Posterior cingulate gyrus (tissue), 11 donors: ENCODE measurements at regions of chr18 and their contacts with region 1.

Region 1: GRCh38 chr18:8704361-8705279 is 736 bp upstream of the MTCL1 start:
- DNase-seq: peak; percentile 80 to 98 (median 86)

Region 2: GRCh38 chr18:8609659-8610458 is 94.8 kb before region 1 on chr18:
- intact Hi-C with region 1: loop called (anchors 5 kb)
- DNase-seq: peak in 4 of 10 donors; percentile 10 to 85 (median 50)

Region 3: GRCh38 chr18:8786478-8787370 is 82.1 kb after region 1 on chr18:
- intact Hi-C with region 1: loop called (anchors 10 kb)
- DNase-seq: no peak

Region 4: DNA sequence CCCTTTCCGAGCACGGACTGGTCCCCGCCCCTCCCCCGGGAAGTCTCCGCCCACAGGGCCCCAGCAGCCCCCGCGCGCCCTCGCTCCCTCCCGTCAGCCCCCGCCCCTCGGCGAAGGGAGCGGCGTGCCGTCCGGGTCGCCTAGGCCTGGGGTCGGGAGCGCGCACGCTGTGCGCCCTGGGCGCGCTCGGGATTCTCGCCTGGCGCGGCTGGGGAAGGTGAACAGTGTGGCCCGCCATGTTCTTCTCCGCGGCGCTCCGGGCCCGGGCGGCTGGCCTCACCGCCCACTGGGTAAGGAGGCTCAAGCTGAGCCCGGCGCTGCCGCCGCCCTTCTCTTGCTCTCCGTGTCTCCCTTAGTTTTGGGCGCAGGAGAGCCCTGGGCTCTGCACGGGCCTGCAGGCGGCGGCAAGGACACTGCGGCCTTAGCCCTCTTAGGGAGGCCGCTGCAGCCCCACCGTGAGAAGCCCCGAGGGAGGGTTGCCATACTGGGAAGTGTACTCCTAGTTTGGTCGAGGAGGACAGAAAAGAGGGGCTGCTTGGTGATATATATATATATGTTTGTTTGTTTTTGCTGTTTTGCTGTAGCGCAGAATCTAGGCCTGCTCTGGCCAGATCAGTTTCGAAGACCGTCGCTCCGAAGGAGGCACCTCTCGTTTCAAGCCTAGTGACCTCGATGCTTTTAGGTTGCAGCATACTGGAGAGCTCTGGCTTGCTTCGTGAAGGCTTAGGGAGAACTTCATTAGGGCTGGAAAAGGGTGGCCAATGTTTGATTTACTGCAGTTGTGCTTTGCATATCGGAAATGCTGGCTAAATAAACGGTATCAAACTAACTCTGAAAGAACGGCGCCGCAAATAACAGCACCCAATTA is 398.1 kb after region 1 on chr18 and contains the start of gene NDUFV2:
- intact Hi-C with region 1: loop called (anchors 1 kb)
- DNase-seq: peak; percentile 94 to 100 (median 96)

Region 5: DNA sequence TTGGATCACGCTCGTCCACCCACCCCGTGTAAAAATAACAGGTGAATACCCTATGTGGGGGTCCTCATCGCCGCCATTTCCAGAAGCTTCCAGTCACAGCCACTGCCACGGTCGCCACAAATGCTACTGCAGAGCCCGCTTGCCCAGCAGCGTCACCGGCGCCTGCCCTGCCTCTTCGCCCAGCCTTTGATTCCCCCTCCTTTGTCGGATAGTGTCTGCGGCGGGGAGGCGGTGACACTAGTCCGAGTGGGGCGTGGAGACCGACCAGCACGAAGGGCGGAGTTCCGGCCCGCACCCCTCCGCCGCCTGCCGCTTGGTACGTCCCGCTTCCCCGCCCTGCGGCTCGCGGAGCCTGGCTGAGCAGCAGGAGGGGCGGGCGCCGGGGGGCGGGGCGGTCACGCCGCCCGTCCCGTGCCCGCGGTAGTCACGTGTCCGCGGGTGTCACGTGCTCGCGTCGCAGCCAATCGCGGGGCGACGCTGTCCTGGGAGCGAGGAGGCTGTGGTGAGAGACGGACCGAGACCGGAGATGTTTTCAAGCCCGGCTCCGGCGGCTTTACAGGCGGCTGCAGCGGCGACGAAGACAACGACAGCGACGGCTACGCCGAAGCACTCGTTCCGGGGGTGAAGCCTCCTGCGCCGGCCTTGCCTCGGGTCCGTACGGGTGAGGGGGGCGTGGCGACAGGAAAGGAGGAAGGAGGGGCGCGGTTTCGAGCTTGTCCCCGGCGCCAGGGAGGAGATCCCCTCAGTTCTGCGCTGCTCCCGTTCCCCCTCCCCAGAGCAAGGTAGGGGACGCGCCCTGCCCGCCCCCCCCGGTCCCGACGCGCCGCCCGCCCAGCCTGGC is 431.9 kb after region 1 on chr18 and contains the start of gene ANKRD12:
- intact Hi-C with region 1: loop called (anchors 10 kb)
- DNase-seq: peak; percentile 95 to 100 (median 98)